ENCODE measurements at regions of chr14 and their contacts with region 1.

Region 1: DNA sequence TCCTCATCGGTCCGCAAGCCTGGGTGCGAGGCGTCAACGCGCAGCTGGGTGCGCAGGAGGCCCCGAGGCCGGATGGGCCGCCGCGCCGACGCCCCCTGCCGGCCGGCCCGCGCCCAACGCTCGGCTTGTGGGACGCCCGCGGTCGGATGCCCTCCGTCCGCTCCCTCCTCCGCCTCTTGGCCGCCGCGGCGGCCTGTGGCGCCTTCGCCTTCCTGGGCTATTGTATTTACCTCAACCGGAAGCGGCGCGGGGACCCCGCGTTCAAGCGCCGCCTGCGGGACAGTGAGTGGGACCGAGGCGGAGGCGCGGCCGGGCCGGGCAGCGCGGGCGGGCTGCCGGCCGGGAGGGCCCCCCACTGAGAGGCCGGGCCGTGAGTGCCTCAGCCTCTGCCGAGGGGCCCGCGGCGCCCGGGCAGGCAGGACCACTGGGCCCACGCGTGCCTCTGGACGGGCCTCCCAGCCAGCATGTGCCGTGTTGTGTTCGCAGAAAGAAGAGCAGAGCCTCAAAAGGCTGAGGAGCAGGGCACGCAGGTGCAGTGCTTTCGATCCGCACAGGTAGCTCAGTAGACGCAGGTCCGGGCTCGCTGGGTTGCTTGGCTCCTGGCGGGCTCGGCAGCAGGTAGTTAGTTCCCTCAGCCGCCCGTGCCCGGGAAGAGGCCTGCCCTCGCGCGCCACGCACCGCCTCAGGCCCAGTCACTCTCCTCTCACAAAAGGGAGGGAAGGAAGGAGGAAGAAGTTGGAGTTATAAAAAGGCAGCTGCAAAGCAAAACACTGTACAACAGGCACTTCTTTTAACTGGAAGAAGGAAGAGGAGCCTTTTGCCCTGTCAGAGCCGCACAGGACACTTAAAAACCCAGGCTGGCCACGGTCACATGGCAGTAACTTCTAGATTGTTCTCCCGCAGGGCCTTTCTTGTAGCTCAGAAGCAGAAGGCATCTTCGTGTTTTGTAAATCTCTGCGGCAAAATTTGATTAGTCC is at the start of gene TOMM20L:
- DNase-seq: peak; percentile 83
- ATAC-seq: peak; percentile 92
- H3K4me3 Mint-ChIP-seq: peak within 1 kb of the TSS; percentile 83
- H3K27ac Mint-ChIP-seq: peak within 1 kb of the TSS; percentile 77
- H3K4me1 Mint-ChIP-seq: peaks cover 14% of the 10 kb centered on the region
- H3K27me3 Mint-ChIP-seq: no peaks in the 10 kb centered on the region
- CTCF ChIP-seq: peak; percentile 76
- total RNA-seq, gene TOMM20L: 0.37 TPM in 1 of 2 replicates, not detected in the other

Region 2: GRCh38 chr14:57244106-57244505 is 1152.0 kb before region 1 on chr14:
- CTCF ChIA-PET with region 1: no interaction called
- POLR2A ChIA-PET with region 1: no interaction called
- intact Hi-C with region 1: no loop called
- DNase-seq: no peak
- ATAC-seq: no peak
- H3K4me3 Mint-ChIP-seq: no peak overlapping the region
- H3K27ac Mint-ChIP-seq: no peak overlapping the region
- H3K4me1 Mint-ChIP-seq: no peaks in the 10 kb centered on the region
- H3K27me3 Mint-ChIP-seq: no peaks in the 10 kb centered on the region
- CTCF ChIP-seq: no peak

Region 3: GRCh38 chr14:58107947-58108552 is 288.1 kb before region 1 on chr14:
- CTCF ChIA-PET with region 1: interaction called, 4 read pairs
- POLR2A ChIA-PET with region 1: no interaction called
- intact Hi-C with region 1: loop called (anchors 1 kb)
- DNase-seq: no peak
- ATAC-seq: no peak
- H3K4me3 Mint-ChIP-seq: no peak overlapping the region
- H3K27ac Mint-ChIP-seq: no peak overlapping the region
- H3K4me1 Mint-ChIP-seq: no peaks in the 10 kb centered on the region
- H3K27me3 Mint-ChIP-seq: peaks cover 4% of the 10 kb centered on the region
- CTCF ChIP-seq: no peak

Region 4: DNA sequence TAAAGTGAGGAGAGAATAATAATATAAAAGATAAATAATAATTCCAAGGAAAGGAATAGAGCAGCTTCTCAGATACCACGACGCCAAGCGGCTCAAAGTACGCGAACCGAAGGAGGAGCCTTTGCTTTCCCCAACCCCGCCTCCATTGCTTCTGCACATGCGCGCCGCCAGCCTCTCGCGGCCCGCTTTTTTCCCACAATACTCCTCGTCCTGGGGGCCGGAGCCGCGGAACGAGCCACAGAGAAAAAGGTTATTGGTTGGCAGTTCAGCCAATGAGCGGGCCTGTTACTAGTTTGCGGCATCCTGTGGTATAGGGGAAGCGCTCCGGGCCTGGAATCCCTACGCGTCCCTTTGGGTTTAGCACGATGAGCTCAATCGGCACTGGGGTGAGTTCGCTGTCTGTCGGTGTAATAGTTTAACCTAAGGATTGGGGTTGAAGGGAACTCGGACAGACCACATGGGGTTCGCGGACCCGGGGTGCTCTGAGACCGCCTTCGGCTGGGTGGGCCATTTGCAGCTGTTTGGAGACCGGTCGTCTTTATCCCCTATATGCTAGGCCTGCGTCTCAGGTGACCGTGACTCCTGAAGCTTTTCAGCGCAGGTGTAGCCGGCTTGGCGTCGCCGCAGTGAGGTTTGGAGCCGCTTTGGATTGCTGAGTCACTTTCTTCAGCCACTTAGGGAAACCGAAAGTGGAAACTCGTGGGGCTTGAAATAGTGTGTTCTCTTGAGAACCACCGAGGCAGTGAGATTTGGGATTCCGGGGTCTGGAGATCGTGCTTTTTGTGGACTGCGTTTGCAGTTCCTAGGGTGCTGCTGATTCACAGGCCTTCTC is 151.3 kb before region 1 on chr14 and contains the start of gene PSMA3:
- CTCF ChIA-PET with region 1: interaction called, 3 read pairs
- POLR2A ChIA-PET with region 1: no interaction called
- intact Hi-C with region 1: loop called (anchors 2 kb)
- DNase-seq: peak; percentile 94
- ATAC-seq: peak; percentile 91
- H3K4me3 Mint-ChIP-seq: peak within 1 kb of the TSS; percentile 98
- H3K27ac Mint-ChIP-seq: peak within 1 kb of the TSS; percentile 98
- H3K4me1 Mint-ChIP-seq: peaks cover 51% of the 10 kb centered on the region
- H3K27me3 Mint-ChIP-seq: peaks cover 1% of the 10 kb centered on the region
- CTCF ChIP-seq: no peak
- total RNA-seq, gene PSMA3: 204 and 208 TPM in 2 replicates

Region 5: GRCh38 chr14:58414845-58415244 is 18.7 kb after region 1 on chr14:
- CTCF ChIA-PET with region 1: interaction called, 3 read pairs
- POLR2A ChIA-PET with region 1: no interaction called
- intact Hi-C with region 1: loop called (anchors 2 kb)
- DNase-seq: no peak
- ATAC-seq: no peak
- H3K4me3 Mint-ChIP-seq: no peak overlapping the region
- H3K27ac Mint-ChIP-seq: no peak overlapping the region
- H3K4me1 Mint-ChIP-seq: peaks cover 11% of the 10 kb centered on the region
- H3K27me3 Mint-ChIP-seq: no peaks in the 10 kb centered on the region
- CTCF ChIP-seq: no peak

Region 6: GRCh38 chr14:58533446-58533845 is 137.3 kb after region 1 on chr14:
- CTCF ChIA-PET with region 1: no interaction called
- POLR2A ChIA-PET with region 1: no interaction called
- intact Hi-C with region 1: no loop called
- DNase-seq: no peak
- ATAC-seq: no peak
- H3K4me3 Mint-ChIP-seq: no peak overlapping the region
- H3K27ac Mint-ChIP-seq: no peak overlapping the region
- H3K4me1 Mint-ChIP-seq: no peaks in the 10 kb centered on the region
- H3K27me3 Mint-ChIP-seq: no peaks in the 10 kb centered on the region
- CTCF ChIP-seq: no peak

Measured in activated B cell treated with CpG ODN at 0.5 μM for 24 hours (primary cell).